WTC11 (cell line): ENCODE measurements at regions of chr12 and their contacts with region 1.

Region 1: DNA sequence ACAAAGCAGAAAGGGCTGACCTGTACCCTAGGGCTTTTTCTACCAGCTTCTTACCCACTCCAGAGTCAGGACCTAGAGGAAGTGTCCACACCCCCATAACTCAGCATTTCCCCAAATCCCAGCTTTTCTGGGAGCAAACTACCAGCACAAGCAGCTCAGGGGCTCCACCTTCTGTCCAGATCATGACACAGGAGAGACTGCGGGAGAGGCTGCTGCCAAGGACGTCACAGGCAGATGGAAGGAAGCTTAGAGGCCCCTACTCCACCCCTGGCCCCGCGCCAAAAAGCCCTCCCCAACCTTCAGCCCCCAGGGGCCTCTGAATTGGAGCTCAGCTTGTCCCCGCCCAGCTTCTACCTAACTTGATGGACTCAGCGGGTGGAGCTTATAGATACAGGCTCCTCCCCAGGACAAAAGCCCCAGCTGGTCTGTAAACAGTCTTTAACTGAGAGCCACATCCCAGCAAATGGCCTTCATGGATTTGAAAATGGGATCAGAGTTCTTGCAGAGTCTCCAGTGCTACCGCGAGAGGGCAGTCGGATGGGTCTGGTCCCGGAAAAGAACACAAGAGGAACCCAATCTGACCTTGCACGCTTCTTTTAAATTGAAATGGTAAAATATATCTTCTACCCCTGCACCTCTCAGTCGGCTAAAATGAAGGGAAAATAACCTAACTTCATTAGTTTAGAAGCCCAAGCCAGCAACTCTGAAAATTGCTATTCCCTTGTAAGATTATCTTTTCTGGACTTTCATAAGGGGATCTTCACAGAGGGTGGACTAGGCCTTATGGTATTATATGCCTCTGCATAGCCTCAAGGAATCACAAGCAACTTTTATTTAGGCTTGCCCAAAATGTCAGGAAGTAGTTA is 6.8 kb upstream of the BAZ2A start:
- DNase-seq: peak; percentile 99
- ATAC-seq: peak; percentile 70
- H3K4me3 Mint-ChIP-seq: peak overlapping the region; percentile 97
- H3K27ac Mint-ChIP-seq: peak overlapping the region; percentile 99
- H3K4me1 Mint-ChIP-seq: peaks cover 42% of the 10 kb centered on the region
- H3K27me3 Mint-ChIP-seq: no peaks in the 10 kb centered on the region
- CTCF ChIP-seq: peak; percentile 41; the same call in 1 of the 2 replicates

Region 2: GRCh38 chr12:56521590-56522371 is 115.1 kb before region 1 on chr12 and contains the start of gene RBMS2:
- CTCF ChIA-PET with region 1: interaction called, 26 read pairs
- POLR2A ChIA-PET with region 1: interaction called, 8 read pairs
- DNase-seq: peak; percentile 79
- ATAC-seq: peak; percentile 95
- H3K4me3 Mint-ChIP-seq: peak within 1 kb of the TSS; percentile 87
- H3K27ac Mint-ChIP-seq: peak within 1 kb of the TSS; percentile 88
- H3K4me1 Mint-ChIP-seq: peaks cover 37% of the 10 kb centered on the region
- H3K27me3 Mint-ChIP-seq: no peaks in the 10 kb centered on the region
- CTCF ChIP-seq: no peak
- total RNA-seq, gene RBMS2: 11.8 to 16.7 TPM (median 16.1 TPM) in 3 replicates

Region 3: GRCh38 chr12:56601503-56601902 is 35.4 kb before region 1 on chr12:
- CTCF ChIA-PET with region 1: interaction called, 42 read pairs
- POLR2A ChIA-PET with region 1: interaction called, 3 read pairs
- DNase-seq: peak; percentile 53
- ATAC-seq: peak; percentile 58
- H3K4me3 Mint-ChIP-seq: no peak overlapping the region
- H3K27ac Mint-ChIP-seq: no peak overlapping the region
- H3K4me1 Mint-ChIP-seq: peaks cover 5% of the 10 kb centered on the region
- H3K27me3 Mint-ChIP-seq: no peaks in the 10 kb centered on the region; the same call in 1 of the 2 replicates
- CTCF ChIP-seq: no peak

Region 4: DNA sequence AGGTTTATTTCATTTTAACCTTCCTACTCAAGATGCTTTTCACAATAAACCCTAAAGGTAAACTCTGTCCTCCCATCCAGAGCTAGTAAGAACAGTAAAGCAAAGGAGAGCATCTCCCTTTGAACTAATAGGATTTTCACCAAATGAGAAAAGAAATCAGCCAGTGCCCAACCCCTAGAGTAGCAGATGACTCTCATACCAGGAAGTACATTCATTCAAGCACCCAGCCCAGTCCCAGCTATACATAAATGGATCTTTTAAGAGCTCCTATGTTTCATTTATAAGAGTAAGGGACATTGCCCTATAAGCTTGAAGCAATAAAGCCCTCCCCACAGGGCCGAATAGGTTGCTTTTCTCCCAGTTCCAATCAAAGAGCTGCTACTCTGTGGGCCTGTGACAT is 14.4 kb before region 1 on chr12:
- CTCF ChIA-PET with region 1: interaction called, 84 read pairs
- POLR2A ChIA-PET with region 1: interaction called, 9 read pairs
- DNase-seq: no peak
- ATAC-seq: no peak
- H3K4me3 Mint-ChIP-seq: no peak overlapping the region
- H3K27ac Mint-ChIP-seq: peak overlapping the region; percentile 54; the same call in 1 of the 2 replicates
- H3K4me1 Mint-ChIP-seq: peaks cover 14% of the 10 kb centered on the region
- H3K27me3 Mint-ChIP-seq: no peaks in the 10 kb centered on the region
- CTCF ChIP-seq: no peak

Region 5: GRCh38 chr12:56677680-56678079 is 40.8 kb after region 1 on chr12:
- CTCF ChIA-PET with region 1: interaction called, 12 read pairs
- POLR2A ChIA-PET with region 1: no interaction called
- DNase-seq: no peak
- ATAC-seq: no peak
- H3K4me3 Mint-ChIP-seq: no peak overlapping the region
- H3K27ac Mint-ChIP-seq: peak overlapping the region; percentile 70; the same call in 1 of the 2 replicates
- H3K4me1 Mint-ChIP-seq: peaks cover 32% of the 10 kb centered on the region
- H3K27me3 Mint-ChIP-seq: no peaks in the 10 kb centered on the region
- CTCF ChIP-seq: no peak

Region 6: DNA sequence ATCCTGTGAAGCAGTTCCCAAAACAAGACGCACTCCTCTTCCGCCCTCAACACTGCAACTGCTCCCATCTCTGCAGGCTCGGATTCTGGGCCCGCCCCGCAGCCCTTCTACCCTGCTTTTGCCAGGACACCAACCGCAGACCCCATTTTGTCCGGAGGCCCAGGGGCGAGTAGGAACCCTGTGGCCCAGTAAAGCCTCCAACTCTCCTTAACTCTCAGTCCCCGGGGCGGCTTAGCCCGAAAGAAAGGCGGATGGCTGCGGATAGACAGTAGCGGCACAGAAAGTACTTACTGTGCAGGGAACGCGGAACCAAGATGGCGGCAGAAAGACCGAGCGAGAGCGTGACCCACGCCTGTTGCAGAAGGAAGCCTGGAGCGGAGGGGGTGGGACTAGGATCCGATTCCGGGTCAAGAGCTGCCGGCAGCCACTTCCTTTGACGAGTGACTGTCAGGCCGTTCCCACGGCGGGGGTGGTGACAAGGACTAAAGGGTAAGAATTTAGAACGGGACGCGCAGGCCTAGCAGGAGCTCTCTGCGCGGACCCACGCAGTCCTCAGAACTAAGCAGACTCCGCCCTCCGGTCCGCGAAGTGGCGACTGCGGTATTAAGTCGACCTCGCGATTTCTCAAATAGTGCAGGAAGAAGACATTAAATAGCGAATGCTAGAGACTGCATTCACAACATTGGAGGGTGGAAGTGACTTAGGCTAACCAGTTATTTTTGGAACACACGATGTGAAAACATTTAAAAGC is 88.2 kb after region 1 on chr12 and contains the start of gene NACA:
- CTCF ChIA-PET with region 1: interaction called, 13 read pairs
- POLR2A ChIA-PET with region 1: interaction called, 11 read pairs
- DNase-seq: peak; percentile 93
- ATAC-seq: peak; percentile 92
- H3K4me3 Mint-ChIP-seq: peak within 1 kb of the TSS; percentile 99
- H3K27ac Mint-ChIP-seq: peak within 1 kb of the TSS; percentile 98
- H3K4me1 Mint-ChIP-seq: peaks cover 48% of the 10 kb centered on the region
- H3K27me3 Mint-ChIP-seq: no peaks in the 10 kb centered on the region
- CTCF ChIP-seq: no peak
- total RNA-seq, gene NACA: 987 to 1,052 TPM (median 1,025 TPM) in 3 replicates